ENCODE measurements at regions of chr7 and their contacts with region 1.

Region 1: GRCh38 chr7:50359995-50360925 is 55.7 kb downstream of the IKZF1 start:
- DNase-seq: peak; percentile 58 to 93 (median 88)
- ATAC-seq: peak; percentile 92
- H3K4me3 ChIP-seq: peak overlapping the region; percentile 5
- H3K4me3 Mint-ChIP-seq: peak overlapping the region; percentile 73 to 89 (median 78)
- H3K27ac ChIP-seq: peak overlapping the region; percentile 94
- H3K27ac Mint-ChIP-seq: peak overlapping the region in 6 of 9 donors; percentile 91 to 100 (median 100)
- H3K4me1 ChIP-seq: peaks cover 95 to 98% of the 10 kb centered on the region in 2 donors
- H3K4me1 Mint-ChIP-seq: peaks cover 86 to 100% (median 97%) of the 10 kb centered on the region in 7 donors
- H3K27me3 ChIP-seq: no peaks in the 10 kb centered on the region
- H3K27me3 Mint-ChIP-seq: no peaks in the 10 kb centered on the region

Region 2: GRCh38 chr7:50335795-50336754 is 24.2 kb before region 1 on chr7:
- CTCF ChIA-PET with region 1: interaction called, 7 read pairs
- POLR2A ChIA-PET with region 1: interaction called, 2,368 read pairs
- intact Hi-C with region 1: loop called in 1 of 2 experiments (anchors 1 kb)
- DNase-seq: peak in 6 of 9 donors; percentile 54 to 86 (median 60)
- ATAC-seq: peak; percentile 62
- H3K4me3 ChIP-seq: peak overlapping the region; percentile 29
- H3K4me3 Mint-ChIP-seq: peak overlapping the region in 1 of 10 donors; percentile 90
- H3K27ac ChIP-seq: peak overlapping the region; percentile 93
- H3K27ac Mint-ChIP-seq: no peak overlapping the region
- H3K4me1 ChIP-seq: peaks cover 99% of the 10 kb centered on the region in 2 donors
- H3K4me1 Mint-ChIP-seq: peaks cover 0 to 68% (median 17%) of the 10 kb centered on the region in 7 donors
- H3K27me3 ChIP-seq: no peaks in the 10 kb centered on the region
- H3K27me3 Mint-ChIP-seq: no peaks in the 10 kb centered on the region

Region 3: GRCh38 chr7:50342616-50343114 is 17.6 kb before region 1 on chr7:
- CTCF ChIA-PET with region 1: interaction called, 22 read pairs
- POLR2A ChIA-PET with region 1: interaction called, 1,292 read pairs
- intact Hi-C with region 1: loop called (anchors 1 to 2 kb)
- DNase-seq: peak in 6 of 9 donors; percentile 46 to 67 (median 54)
- ATAC-seq: peak; percentile 46
- H3K4me3 ChIP-seq: peak overlapping the region; percentile 22
- H3K4me3 Mint-ChIP-seq: peak overlapping the region in 8 of 10 donors; percentile 77 to 89 (median 84)
- H3K27ac ChIP-seq: peak overlapping the region; percentile 93
- H3K27ac Mint-ChIP-seq: peak overlapping the region in 3 of 9 donors; percentile 90 to 99 (median 97)
- H3K4me1 ChIP-seq: peaks cover 94% of the 10 kb centered on the region in 2 donors
- H3K4me1 Mint-ChIP-seq: peaks cover 0 to 93% (median 65%) of the 10 kb centered on the region in 7 donors
- H3K27me3 ChIP-seq: no peaks in the 10 kb centered on the region
- H3K27me3 Mint-ChIP-seq: no peaks in the 10 kb centered on the region

Region 4: DNA sequence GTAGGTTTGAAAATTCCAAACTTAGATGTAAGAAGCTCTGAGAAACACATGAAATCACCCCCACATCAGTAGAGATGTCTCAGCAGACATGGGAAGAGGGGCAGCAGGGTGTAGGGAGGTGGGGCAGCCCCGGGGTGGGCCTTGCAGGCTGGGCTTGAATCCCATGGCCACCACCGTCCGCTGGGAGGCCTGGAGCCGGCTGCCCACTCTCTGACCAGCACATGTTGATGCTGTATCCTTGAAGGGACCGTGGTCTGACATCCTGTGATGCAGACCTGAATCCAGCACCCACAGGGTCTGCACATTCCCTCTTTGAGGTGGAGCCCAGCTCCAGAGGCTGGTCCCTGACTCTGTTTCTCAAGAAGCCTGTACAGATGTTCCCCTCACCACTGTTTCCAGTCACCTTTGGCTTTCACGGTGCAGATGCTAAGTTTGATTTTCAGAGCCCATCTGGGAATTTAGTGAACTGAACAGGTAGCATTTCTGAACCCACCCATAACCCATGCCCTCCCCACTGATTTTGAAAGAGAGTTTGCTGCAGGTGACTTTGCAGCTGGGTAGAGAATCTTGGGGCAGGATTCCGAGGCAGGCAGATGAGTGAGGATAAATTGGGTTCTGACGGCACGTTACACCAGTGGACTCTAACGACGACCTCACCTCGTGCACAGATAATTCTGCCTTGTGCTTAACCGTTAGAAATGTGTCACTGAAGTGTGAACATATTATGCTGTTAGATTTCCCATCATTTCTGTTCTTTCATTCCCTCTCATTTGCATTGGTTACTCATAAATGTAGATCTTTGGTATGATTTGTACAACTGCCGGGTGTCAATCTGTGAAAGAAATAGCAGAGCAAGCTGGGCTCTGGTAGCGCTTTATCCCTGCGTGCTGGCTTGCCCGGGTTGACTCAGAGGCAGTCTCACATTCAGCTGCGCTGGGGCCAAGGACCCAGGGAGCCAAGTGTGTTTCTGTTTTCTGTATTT is 10.0 kb before region 1 on chr7:
- CTCF ChIA-PET with region 1: interaction called, 22 read pairs
- POLR2A ChIA-PET with region 1: interaction called, 1,292 read pairs
- intact Hi-C with region 1: loop called (anchors 1 kb)
- DNase-seq: peak in 5 of 9 donors; percentile 55 to 77 (median 68)
- ATAC-seq: peak; percentile 51
- H3K4me3 ChIP-seq: peak overlapping the region; percentile 4
- H3K4me3 Mint-ChIP-seq: peak overlapping the region; percentile 71 to 95 (median 78)
- H3K27ac ChIP-seq: peak overlapping the region; percentile 93
- H3K27ac Mint-ChIP-seq: peak overlapping the region in 6 of 9 donors; percentile 91 to 100 (median 100)
- H3K4me1 ChIP-seq: peaks cover 96% of the 10 kb centered on the region in 2 donors
- H3K4me1 Mint-ChIP-seq: peaks cover 0 to 100% (median 97%) of the 10 kb centered on the region in 7 donors
- H3K27me3 ChIP-seq: no peaks in the 10 kb centered on the region
- H3K27me3 Mint-ChIP-seq: no peaks in the 10 kb centered on the region